ENCODE measurements at regions of chr11 and their contacts with region 1.

Region 1: GRCh38 chr11:106311531-106312230 is 234.2 kb downstream of the AASDHPPT start:
- DNase-seq: no peak
- H3K4me3 Mint-ChIP-seq: no peak overlapping the region
- H3K27ac Mint-ChIP-seq: no peak overlapping the region
- H3K4me1 Mint-ChIP-seq: no peaks in the 10 kb centered on the region
- H3K27me3 Mint-ChIP-seq: no peaks in the 10 kb centered on the region

Region 2: DNA sequence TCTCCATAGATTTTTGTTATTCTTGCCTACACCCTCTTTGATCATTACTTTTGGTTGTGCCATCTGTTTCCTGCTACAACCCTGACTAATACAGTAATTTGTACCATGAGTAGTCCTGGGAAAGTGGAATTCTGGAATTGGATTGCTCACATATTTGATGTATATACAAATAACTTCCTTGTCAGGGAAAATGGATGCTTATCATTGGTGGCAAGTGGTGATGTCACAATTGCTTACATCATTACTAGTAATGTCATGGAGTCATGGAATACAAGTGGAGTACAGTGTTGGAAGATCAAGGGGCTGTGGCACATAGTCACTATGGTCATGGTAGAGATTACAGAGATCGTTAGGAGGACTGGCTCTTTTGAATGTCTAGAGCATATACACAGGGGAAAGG is 209.9 kb before region 1 on chr11:
- intact Hi-C with region 1: no loop called
- DNase-seq: no peak
- H3K4me3 Mint-ChIP-seq: no peak overlapping the region
- H3K27ac Mint-ChIP-seq: no peak overlapping the region
- H3K4me1 Mint-ChIP-seq: no peaks in the 10 kb centered on the region
- H3K27me3 Mint-ChIP-seq: no peaks in the 10 kb centered on the region

Region 3: GRCh38 chr11:106424111-106424510 is 112.4 kb after region 1 on chr11:
- intact Hi-C with region 1: loop called (anchors 5 kb)
- DNase-seq: no peak
- H3K4me3 Mint-ChIP-seq: no peak overlapping the region
- H3K27ac Mint-ChIP-seq: no peak overlapping the region
- H3K4me1 Mint-ChIP-seq: no peaks in the 10 kb centered on the region
- H3K27me3 Mint-ChIP-seq: no peaks in the 10 kb centered on the region